ENCODE measurements at regions of chr6 and their contacts with region 1.

Region 1: DNA sequence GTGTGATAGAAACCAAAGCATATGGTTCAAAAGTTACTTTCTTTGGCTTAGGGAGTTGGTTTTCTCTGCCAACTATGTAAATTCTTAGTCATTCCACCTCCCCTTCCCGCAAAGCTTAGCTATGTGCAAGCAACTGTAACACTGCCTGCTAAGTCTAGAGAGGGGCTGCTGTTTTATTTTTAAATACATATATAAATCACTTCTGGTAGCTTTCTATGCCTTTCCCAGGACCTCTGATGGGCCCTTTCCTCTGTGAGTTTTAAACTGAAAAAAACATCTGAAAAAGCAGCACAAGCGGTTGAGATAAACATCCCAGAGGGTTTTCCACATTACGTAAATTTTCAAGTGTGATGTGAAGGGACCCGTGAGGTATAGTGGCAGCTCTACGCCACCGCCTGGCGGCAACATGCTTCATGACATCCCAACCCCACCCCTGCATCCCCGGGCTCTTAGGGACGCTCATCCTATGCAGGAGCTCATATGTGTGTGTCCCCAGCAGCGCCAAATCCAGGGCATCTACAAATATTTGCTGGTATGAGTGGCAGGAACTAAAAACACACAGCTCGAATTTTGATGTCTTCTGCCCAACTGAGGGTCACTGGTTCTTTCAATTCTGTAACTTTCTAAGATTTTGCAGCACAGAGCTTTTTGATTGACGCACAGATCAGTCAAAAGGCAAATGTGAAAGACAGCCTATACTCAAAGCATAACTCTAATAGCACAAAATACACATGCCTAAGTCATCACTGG is 12.7 kb downstream of the SAYSD1 start:
- DNase-seq: peak; percentile 84
- ATAC-seq: peak; percentile 96
- H3K4me3 ChIP-seq: no peak overlapping the region
- H3K27ac ChIP-seq: peak overlapping the region; percentile 41; the same call in 1 of the 2 replicates
- H3K4me1 ChIP-seq: peaks cover 3% of the 10 kb centered on the region; the same call in 1 of the 2 replicates
- H3K27me3 ChIP-seq: no peaks in the 10 kb centered on the region
- CTCF ChIP-seq: peak; percentile 49
- POLR2A ChIP-seq: no peak
- RAD21 ChIP-seq: peak; percentile 29; the same call in 1 of the 2 replicates

Region 2: DNA sequence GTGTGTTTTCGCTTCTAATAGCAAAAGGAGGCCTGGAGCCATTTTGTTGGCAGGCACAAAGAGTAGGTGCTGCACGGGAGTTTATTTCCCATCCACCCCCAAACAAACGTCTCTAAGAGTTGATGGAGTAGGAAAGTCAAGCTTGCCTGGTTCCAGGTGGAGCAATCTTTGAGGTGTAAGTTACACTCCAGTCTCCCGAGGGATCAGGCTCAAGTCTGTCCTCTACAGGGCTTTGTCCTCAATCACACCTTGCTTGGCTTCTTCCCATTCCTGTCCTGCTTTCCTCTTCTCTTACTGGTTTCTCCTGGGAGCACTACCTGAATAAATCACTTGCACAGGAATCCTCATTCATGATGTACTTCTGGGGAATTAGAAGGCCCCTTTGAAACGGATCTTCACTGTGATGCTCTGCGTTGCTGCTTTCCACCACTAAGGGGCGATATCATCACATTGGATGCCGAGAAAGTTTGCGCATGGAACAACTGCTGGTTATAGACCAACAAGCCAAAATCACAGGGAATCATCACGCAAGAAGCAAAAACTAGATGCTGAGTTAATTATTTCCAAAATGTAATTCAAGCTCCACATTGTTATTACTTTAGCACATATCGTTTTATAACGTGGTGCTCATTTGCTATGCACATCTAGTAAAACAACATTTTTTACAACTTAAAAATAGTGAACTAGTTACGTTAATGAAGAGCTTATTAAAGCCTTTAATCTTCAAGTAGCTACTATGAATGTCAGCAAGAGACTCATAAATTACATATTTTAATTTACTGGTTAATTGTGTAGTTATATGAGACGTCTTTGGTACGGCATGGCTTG is 230.3 kb before region 1 on chr6:
- CTCF ChIA-PET with region 1: no interaction called
- POLR2A ChIA-PET with region 1: no interaction called
- dilution Hi-C with region 1: no loop called
- in situ Hi-C with region 1: no loop called
- intact Hi-C with region 1: loop called (anchors 5 kb)
- DNase-seq: peak; percentile 36
- ATAC-seq: peak; percentile 92
- H3K4me3 ChIP-seq: no peak overlapping the region
- H3K27ac ChIP-seq: no peak overlapping the region
- H3K4me1 ChIP-seq: no peaks in the 10 kb centered on the region
- H3K27me3 ChIP-seq: 0 out of 2 replicates have a peak, but pooled peaks cover 1% of the 10 kb centered on the region
- CTCF ChIP-seq: peak; percentile 80
- POLR2A ChIP-seq: no peak
- RAD21 ChIP-seq: peak; percentile 79

Region 3: DNA sequence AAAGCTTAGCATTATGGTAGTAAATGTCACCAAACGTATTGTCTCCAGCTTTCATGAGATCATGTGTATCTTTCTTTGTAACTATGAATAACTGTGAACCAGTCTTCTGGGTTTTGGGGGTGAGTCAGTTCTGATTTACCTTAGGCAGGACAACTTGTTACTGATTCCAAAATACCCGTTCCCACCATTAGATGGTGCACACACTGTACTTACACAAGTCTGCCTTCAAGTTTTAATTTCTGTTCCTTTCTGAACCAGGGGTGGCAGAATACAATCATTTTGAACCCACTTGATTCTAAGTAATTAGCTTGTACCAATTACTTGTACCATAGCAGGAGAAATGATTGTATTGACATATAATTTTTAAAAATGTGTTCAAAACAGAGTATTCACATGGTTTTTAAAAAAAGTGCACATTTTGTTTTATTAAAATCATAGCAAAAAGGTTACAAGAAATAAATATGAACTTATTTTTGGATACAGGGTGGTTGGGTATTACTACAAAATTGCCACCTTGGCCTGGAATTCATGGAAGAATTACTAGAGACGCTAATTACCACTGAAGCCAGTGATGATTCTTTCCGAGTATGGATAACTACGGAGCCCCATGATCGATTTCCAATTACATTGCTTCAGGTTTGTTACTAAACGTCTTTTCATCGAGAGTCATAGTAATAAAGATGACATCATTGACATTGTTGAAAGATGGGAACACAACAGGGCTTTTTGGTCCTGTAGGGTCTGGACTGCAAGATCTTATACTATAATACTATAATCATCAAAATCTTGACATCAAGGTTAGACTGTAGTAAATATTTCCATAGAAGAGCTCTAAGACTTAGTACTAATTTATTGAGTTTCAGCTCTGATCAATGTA is 128.8 kb before region 1 on chr6:
- CTCF ChIA-PET with region 1: interaction called, 7 read pairs
- POLR2A ChIA-PET with region 1: no interaction called
- dilution Hi-C with region 1: no loop called
- in situ Hi-C with region 1: no loop called
- intact Hi-C with region 1: loop called (anchors 1 kb)
- DNase-seq: peak; percentile 79
- ATAC-seq: peak; percentile 86
- H3K4me3 ChIP-seq: no peak overlapping the region
- H3K27ac ChIP-seq: no peak overlapping the region
- H3K4me1 ChIP-seq: no peaks in the 10 kb centered on the region
- H3K27me3 ChIP-seq: no peaks in the 10 kb centered on the region
- CTCF ChIP-seq: peak; percentile 59
- POLR2A ChIP-seq: no peak
- RAD21 ChIP-seq: peak; percentile 58

Region 4: DNA sequence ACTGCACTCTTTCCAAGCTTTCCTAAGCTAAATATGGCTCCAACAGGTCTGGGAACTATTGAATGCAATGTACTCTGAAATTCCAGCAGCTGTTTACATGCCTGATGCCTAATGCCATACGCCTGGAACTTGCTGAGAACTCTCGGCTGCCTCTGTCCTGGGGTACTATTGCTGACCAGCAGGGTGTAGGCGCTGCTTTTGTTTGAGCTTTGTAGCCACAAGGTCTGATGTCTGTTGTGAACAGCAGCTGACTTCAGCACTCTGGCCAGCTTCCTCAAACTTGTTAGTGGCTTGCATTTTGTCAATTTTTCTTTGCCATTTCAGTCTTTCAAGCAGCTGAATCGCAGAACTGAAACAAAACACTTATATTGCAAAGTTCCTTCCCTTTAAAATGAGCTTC is 13.9 kb before region 1 on chr6:
- CTCF ChIA-PET with region 1: interaction called, 12 read pairs
- POLR2A ChIA-PET with region 1: no interaction called
- dilution Hi-C with region 1: no loop called
- in situ Hi-C with region 1: no loop called
- intact Hi-C with region 1: loop called (anchors 1 kb)
- DNase-seq: peak; percentile 68
- ATAC-seq: peak; percentile 99
- H3K4me3 ChIP-seq: no peak overlapping the region
- H3K27ac ChIP-seq: no peak overlapping the region
- H3K4me1 ChIP-seq: no peaks in the 10 kb centered on the region
- H3K27me3 ChIP-seq: peaks cover 6% of the 10 kb centered on the region; the same call in 1 of the 2 replicates
- CTCF ChIP-seq: peak; percentile 48
- POLR2A ChIP-seq: no peak
- RAD21 ChIP-seq: peak; percentile 48